Natural killer cell (primary cell): ENCODE measurements at regions of chr9 and their contacts with region 1.

Region 1: GRCh38 chr9:92438900-92439526 is 14.7 kb upstream of the OMD start:
- DNase-seq: peak in 1 of 2 donors; percentile 32
- ATAC-seq: no peak
- H3K4me3 ChIP-seq: no peak overlapping the region
- H3K4me3 Mint-ChIP-seq: no peak overlapping the region
- H3K27ac ChIP-seq: no peak overlapping the region
- H3K27ac Mint-ChIP-seq: peak overlapping the region in 1 of 2 donors; percentile 91
- H3K4me1 ChIP-seq: no peaks in the 10 kb centered on the region
- H3K4me1 Mint-ChIP-seq: peaks cover 12 to 20% of the 10 kb centered on the region in 2 donors
- H3K27me3 ChIP-seq: no peaks in the 10 kb centered on the region
- H3K27me3 Mint-ChIP-seq: no peaks in the 10 kb centered on the region
- CTCF ChIP-seq: peak; percentile 44

Region 2: GRCh38 chr9:92140074-92140753 is 298.8 kb before region 1 on chr9:
- intact Hi-C with region 1: loop called (anchors 2 kb)
- DNase-seq: peak; percentile 64 to 79
- ATAC-seq: peak; percentile 77 to 87 (median 83)
- H3K4me3 ChIP-seq: no peak overlapping the region
- H3K4me3 Mint-ChIP-seq: no peak overlapping the region
- H3K27ac ChIP-seq: no peak overlapping the region
- H3K27ac Mint-ChIP-seq: no peak overlapping the region
- H3K4me1 ChIP-seq: peaks cover 11% of the 10 kb centered on the region
- H3K4me1 Mint-ChIP-seq: peaks cover 15 to 16% of the 10 kb centered on the region in 2 donors
- H3K27me3 ChIP-seq: peaks cover 6% of the 10 kb centered on the region
- H3K27me3 Mint-ChIP-seq: peaks cover 33 to 35% of the 10 kb centered on the region in 2 donors
- CTCF ChIP-seq: peak; percentile 93

Region 3: GRCh38 chr9:92325269-92325990 is 113.6 kb before region 1 on chr9 and contains the starts of genes CENPP and NOL8:
- intact Hi-C with region 1: loop called (anchors 5 kb)
- DNase-seq: peak; percentile 82 to 91
- ATAC-seq: peak; percentile 91 to 96 (median 91)
- H3K4me3 ChIP-seq: peak within 1 kb of the TSS; percentile 65
- H3K4me3 Mint-ChIP-seq: peak within 1 kb of the TSS; percentile 99
- H3K27ac ChIP-seq: peak within 1 kb of the TSS; percentile 95
- H3K27ac Mint-ChIP-seq: peak within 1 kb of the TSS; percentile 98
- H3K4me1 ChIP-seq: peaks cover 4% of the 10 kb centered on the region
- H3K4me1 Mint-ChIP-seq: peaks cover 31 to 33% of the 10 kb centered on the region in 2 donors
- H3K27me3 ChIP-seq: no peaks in the 10 kb centered on the region
- H3K27me3 Mint-ChIP-seq: no peaks in the 10 kb centered on the region
- CTCF ChIP-seq: no peak
- total RNA-seq, gene CENPP: 10.3 to 14.5 (median 12.1) TPM
- total RNA-seq, gene NOL8: 42.3 to 50.7 (median 46.7) TPM

Region 4: DNA sequence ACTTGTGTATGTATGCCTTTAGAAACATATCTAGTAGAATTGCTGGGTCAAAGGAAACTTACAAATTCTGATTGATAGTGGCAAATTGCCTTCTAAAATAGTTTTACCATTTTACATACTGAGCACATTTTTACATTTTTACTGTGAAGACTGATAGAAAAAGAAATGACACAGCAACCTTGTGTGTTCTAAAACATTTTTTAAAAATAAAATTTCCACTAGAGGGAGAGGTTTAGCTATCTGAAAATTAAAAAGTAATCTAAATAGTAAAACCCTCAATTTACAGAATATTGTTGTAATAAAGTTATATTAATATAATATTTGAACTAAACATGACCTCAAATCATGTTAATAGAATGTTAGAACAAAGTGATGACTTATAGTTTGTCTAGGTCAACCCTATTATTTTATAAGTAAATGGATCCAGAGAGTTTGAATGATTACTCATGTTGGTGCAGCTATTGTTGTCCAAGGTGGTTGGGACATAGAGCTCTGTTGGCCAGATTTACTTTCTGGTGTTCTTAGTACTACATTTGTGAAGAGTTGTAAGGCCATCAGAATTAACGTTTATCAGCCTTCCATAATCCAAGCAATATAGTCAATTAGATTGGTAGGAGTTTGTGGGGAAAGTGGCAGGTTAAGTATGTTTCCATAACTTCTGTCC is 96.1 kb before region 1 on chr9:
- intact Hi-C with region 1: loop called (anchors 5 kb)
- DNase-seq: no peak
- ATAC-seq: no peak
- H3K4me3 ChIP-seq: no peak overlapping the region
- H3K4me3 Mint-ChIP-seq: no peak overlapping the region
- H3K27ac ChIP-seq: no peak overlapping the region
- H3K27ac Mint-ChIP-seq: no peak overlapping the region
- H3K4me1 ChIP-seq: no peaks in the 10 kb centered on the region
- H3K4me1 Mint-ChIP-seq: no peaks in the 10 kb centered on the region
- H3K27me3 ChIP-seq: no peaks in the 10 kb centered on the region
- H3K27me3 Mint-ChIP-seq: no peaks in the 10 kb centered on the region
- CTCF ChIP-seq: no peak